ENCODE measurements at regions of chr16 and their contacts with region 1.

Region 1: GRCh38 chr16:2838928-2839327 is 8.8 kb downstream of the ZG16B start:
- DNase-seq: no peak
- ATAC-seq: peak; percentile 78
- H3K4me3 ChIP-seq: no peak overlapping the region
- H3K27ac ChIP-seq: peak overlapping the region; percentile 79
- H3K4me1 ChIP-seq: peaks cover 41% of the 10 kb centered on the region
- H3K27me3 ChIP-seq: no peaks in the 10 kb centered on the region
- CTCF ChIP-seq: peak; percentile 97

Region 2: DNA sequence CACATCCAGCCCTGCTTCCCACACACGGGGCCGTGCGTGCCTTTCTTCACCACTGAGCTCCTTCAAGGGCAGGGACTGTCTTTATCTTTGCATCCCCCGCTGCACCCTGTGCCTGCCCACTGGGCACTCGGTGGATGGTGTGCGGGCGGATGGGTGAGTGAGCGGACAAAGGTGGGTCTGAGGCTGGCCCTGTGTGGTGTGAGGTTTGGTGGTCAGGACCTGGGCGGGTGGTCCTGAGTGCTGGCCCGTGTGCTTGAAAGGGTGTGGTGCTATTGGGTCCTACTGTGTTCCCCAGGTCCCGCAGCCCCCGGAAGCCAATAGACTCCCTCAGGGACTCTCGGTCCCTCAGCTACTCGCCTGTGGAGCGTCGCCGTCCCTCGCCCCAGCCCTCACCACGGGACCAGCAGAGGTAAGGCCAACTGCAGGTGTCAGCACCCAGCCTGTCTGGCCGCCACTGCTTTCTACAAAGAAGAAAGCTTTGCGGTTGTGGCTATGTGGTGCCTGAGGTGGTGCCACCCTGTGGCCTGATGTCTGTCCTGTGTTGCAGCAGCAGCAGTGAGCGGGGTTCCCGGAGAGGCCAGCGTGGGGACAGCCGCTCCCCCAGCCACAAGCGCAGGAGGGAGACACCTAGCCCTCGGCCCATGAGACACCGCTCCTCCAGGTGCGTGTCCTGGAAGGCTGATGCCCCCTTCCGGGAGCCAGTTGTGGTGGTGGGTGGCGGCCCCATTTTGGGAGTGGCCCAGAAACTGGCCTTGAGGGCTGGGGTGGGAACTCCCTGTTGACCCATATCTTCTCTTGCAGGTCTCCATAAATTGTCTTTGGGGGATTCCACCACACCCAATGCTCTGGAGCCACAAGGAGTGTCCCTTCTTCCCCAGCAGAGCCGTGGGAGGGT is 68.6 kb before region 1 on chr16:
- CTCF ChIA-PET with region 1: no interaction called
- POLR2A ChIA-PET with region 1: no interaction called
- in situ Hi-C with region 1: no loop called
- intact Hi-C with region 1: loop called (anchors 5 kb)
- DNase-seq: no peak
- ATAC-seq: peak; percentile 54
- H3K4me3 ChIP-seq: no peak overlapping the region
- H3K27ac ChIP-seq: peak overlapping the region; percentile 98
- H3K4me1 ChIP-seq: peaks cover 84% of the 10 kb centered on the region
- H3K27me3 ChIP-seq: no peaks in the 10 kb centered on the region
- CTCF ChIP-seq: peak; percentile 83

Region 3: DNA sequence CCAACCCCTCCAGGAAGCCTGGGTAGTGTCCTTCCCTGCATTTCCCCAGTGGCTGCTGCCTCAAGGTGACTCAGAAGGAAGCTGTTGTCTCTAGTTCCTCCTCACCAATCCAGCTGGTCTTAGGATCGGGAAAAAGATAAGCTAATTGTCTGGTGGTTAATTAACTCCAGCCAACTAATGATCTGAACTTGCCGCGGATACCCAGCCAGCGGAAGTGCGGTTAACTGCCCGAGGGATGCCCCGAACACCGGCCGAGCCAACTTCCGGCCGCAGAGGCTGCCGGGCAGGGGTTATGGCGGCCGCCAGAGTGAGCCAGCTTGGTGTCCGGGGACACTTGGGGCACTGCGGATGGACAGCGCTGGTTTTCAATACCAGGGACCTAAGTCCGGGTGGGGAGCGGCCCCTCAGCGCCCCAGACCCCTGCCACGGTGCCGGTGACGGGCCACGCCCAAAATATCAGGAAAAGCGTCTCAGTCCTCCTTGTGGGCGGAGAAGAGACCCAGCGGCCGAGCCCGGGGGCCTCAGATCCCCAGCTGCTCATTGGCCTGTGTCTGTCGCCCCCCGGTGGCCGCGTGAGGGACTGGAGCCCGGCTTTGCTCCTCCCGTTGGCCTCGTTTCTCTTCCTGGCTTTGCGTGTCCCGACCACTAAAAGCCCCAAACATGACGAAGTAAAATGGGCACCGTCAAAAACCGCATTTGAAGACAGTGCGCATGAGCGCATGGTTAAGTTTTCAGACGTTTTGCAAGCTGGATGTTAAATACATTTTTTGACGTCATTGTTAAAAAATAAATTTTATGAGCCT is 29.3 kb after region 1 on chr16:
- CTCF ChIA-PET with region 1: interaction called, 13 read pairs
- POLR2A ChIA-PET with region 1: interaction called, 3 read pairs
- in situ Hi-C with region 1: no loop called
- intact Hi-C with region 1: loop called (anchors 1 kb)
- DNase-seq: peak; percentile 84
- ATAC-seq: peak; percentile 97
- H3K4me3 ChIP-seq: peak overlapping the region; percentile 53 to 62
- H3K27ac ChIP-seq: peak overlapping the region; percentile 98
- H3K4me1 ChIP-seq: peaks cover 16% of the 10 kb centered on the region
- H3K27me3 ChIP-seq: no peaks in the 10 kb centered on the region
- CTCF ChIP-seq: peak; percentile 97

Region 4: DNA sequence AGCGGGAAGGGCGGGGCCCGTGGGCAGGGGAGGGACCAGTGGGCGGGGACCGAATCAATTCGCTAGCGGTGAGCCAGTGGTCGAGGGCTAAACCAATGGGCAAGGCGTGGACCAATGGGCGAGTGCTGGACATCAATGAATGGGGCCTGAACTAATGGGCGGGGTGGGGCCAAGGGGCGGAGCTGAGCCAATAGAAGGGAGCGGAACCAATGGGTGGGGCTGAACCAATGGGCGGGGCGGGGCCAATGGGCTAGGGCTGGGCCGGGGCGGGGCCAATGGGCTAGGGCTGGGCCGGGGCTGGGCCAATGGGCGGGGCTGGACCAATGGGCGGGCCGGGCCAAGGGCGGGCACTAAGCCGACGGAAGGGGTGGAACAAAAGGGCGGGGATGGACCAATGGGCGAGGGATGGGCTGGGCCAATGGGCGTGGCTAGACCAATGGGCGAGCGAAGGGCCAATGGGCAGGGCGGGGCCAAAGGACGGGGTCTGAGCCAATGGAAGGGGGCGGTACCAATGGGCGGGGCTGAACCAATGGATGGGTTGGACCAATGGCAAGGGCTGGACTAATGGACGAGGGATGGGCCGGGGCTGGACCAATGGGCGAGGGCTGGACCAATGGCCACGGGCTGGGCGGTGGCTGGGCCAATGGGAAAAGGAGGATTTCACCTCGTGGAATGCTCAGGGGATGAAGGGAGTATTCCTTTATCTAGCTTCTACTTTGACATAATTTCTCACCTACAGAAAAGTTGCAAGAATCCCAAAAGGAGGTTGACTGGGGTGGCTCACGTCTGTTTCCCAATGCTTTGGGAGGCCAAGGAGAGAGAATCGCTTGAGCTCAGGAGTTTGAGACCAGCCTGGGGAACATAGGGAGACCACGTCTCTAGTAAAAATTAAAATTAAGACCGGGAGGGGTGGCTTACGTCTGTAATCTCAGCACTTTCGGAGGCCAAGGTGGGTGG is 66.8 kb after region 1 on chr16:
- CTCF ChIA-PET with region 1: interaction called, 12 read pairs
- POLR2A ChIA-PET with region 1: no interaction called
- in situ Hi-C with region 1: no loop called
- intact Hi-C with region 1: no loop called
- DNase-seq: peak; percentile 98
- ATAC-seq: peak; percentile 88
- H3K4me3 ChIP-seq: peak overlapping the region; percentile 64 to 92
- H3K27ac ChIP-seq: peak overlapping the region; percentile 76
- H3K4me1 ChIP-seq: peaks cover 6% of the 10 kb centered on the region
- H3K27me3 ChIP-seq: no peaks in the 10 kb centered on the region
- CTCF ChIP-seq: no peak

Measured in Panc1 (cell line).